ENCODE measurements at regions of chr9 and their contacts with region 1.

Region 1: GRCh38 chr9:33721674-33722358 is 73.5 kb upstream of the PRSS3 start:
- DNase-seq: peak; percentile 56 to 87 (median 60)
- ATAC-seq: peak; percentile 84
- H3K4me3 ChIP-seq: no peak overlapping the region
- H3K27ac ChIP-seq: no peak overlapping the region
- H3K4me1 ChIP-seq: peaks cover 0 to 13% of the 10 kb centered on the region in 2 experiments; a peak in 2 of 5 replicates
- H3K27me3 ChIP-seq: no peaks in the 10 kb centered on the region
- CTCF ChIP-seq: peak; percentile 99 to 100 (median 99)
- EP300 ChIP-seq: no peak
- POLR2A ChIP-seq: no peak
- RAD21 ChIP-seq: peak; percentile 99 to 100

Region 2: DNA sequence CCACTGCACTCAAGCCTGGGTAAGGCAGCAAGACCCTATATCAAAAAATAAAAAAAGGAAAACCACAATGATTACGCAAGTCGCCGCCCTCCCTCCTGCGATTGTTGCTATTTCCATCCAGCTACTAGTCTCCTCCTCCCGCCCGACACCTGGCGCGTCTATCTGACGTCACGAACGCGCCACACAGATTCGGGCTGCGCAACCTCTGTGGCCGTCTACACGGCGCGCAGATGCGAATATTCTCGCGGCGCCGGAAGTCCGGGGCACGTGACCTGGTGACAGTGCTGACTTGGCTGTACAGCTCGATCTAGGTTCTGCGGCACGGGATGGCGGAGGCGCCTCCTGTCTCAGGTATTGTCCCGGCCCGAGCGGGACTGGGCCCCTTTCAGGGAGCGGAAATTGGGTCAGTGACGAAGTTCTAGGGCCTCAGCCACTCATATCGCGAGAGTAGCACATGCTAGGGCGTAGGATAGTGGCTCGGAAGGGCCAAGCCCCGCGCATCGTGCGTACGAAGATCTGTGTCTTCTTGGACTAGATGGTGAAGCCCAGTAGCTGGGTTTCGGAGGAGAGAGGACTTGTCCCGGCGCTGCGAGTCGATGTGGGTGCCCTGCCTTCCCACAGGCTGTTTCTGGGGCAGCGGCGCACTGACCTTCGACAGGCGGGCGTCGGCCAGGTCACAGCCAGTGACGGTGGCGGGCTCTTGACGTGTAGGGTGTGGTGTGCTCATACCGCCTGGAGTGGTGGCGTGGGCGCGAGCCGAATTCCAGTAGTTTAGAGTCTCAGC is 431.4 kb before region 1 on chr9 and contains the start of gene NFX1:
- CTCF ChIA-PET with region 1: interaction called, 11 read pairs
- POLR2A ChIA-PET with region 1: no interaction called
- in situ Hi-C with region 1: no loop called
- intact Hi-C with region 1: no loop called
- DNase-seq: peak; percentile 83 to 97 (median 87)
- ATAC-seq: peak; percentile 95
- H3K4me3 ChIP-seq: peak within 1 kb of the TSS; percentile 60
- H3K27ac ChIP-seq: peak within 1 kb of the TSS; percentile 99
- H3K4me1 ChIP-seq: peaks cover 14 to 21% of the 10 kb centered on the region in 2 experiments; a peak in 4 of 5 replicates
- H3K27me3 ChIP-seq: no peaks in the 10 kb centered on the region
- CTCF ChIP-seq: no peak; a peak in 1 of 6 replicates
- EP300 ChIP-seq: 0 out of 2 replicates have a peak, but pooled peaks have one; percentile 36
- POLR2A ChIP-seq: peak; percentile 93
- RAD21 ChIP-seq: no peak
- polyA plus RNA-seq, gene NFX1: 8.8 to 32.5 TPM

Region 3: DNA sequence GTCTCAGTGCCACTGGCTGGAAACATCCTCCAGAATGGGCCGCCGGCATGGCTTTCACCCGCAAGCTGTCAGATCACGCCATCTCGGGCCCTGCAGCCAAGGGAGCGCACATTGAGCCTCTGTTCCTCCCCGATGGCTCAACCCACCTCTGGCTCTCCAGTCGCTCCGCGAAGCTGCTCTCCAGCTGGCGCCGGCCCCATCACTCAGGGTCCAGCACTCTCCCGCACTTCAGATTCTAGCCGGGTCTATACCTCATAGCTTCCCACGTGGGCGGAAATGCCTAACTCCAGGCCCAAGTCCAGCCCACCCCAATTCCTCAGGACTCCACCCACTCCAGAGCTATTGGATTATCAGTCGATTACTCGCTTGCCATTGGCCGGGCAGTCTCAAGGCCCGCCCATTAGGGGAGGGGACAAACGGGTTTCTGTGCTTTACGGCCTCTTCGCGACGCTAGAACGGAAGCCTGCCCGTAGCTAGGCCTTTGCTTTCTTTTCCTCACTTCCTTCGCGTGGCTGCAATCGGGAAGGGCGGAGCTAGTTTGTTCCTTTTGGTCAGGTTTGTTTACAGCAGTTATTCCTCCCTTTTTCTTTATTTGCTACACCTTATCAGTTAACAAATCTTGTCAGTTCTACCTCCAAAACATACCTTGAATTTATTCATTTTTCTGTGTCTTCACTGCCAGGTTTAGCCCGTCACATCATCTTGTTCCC is 248.0 kb before region 1 on chr9 and contains the start of gene NOL6:
- CTCF ChIA-PET with region 1: no interaction called
- POLR2A ChIA-PET with region 1: no interaction called
- in situ Hi-C with region 1: no loop called
- intact Hi-C with region 1: loop called (anchors 10 kb)
- DNase-seq: peak; percentile 91 to 98 (median 95)
- ATAC-seq: peak; percentile 100
- H3K4me3 ChIP-seq: peak within 1 kb of the TSS; percentile 97
- H3K27ac ChIP-seq: peak within 1 kb of the TSS; percentile 65
- H3K4me1 ChIP-seq: peaks cover 4 to 7% of the 10 kb centered on the region in 2 experiments; a peak in 3 of 5 replicates
- H3K27me3 ChIP-seq: no peaks in the 10 kb centered on the region
- CTCF ChIP-seq: no peak
- EP300 ChIP-seq: no peak
- POLR2A ChIP-seq: peak; percentile 73
- RAD21 ChIP-seq: no peak
- polyA plus RNA-seq, gene NOL6: 7.7 to 9.4 TPM

Region 4: DNA sequence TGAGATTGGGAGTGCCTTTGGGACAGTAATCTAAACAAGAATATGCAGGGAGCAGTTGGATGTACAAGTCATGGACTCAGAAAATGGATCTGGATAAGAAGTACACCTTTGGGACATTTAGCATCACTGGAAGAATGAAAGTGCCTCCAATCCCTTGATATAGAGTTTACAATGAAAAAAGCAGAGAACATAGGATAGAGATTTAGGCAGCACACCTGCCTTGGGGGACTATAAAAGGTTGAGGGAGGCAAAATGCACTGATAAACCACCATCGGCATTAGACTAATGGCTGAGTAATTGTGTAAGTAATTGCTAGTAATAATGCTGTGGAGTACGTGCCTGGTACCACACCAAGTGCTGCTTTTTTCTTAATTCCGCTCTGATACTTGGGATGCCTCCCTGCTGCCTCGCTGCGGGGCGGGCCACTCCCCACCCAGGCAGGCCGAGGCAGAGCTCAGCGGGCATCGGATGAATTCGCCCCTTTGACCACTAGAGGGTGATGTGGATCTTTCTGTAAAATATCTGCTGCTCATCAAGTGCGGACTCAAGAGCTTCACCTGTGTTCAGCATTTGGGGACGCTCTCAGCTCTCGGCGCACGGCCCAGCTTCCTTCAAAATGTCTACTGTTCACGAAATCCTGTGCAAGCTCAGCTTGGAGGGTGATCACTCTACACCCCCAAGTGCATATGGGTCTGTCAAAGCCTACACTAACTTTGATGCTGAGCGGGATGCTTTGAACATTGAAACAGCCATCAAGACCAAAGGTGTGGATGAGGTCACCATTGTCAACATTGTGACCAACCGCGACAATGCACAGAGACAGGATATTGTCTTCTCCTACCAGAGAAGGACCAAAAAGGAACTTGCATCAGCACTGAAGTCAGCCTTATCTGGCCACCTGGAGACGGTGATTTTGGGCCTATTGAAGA is 97.9 kb before region 1 on chr9:
- CTCF ChIA-PET with region 1: interaction called, 80 read pairs
- POLR2A ChIA-PET with region 1: interaction called, 4 read pairs
- in situ Hi-C with region 1: loop called (anchors 5 kb)
- intact Hi-C with region 1: loop called (anchors 1 kb)
- DNase-seq: peak; percentile 67 to 81 (median 73)
- ATAC-seq: peak; percentile 94
- H3K4me3 ChIP-seq: no peak overlapping the region
- H3K27ac ChIP-seq: no peak overlapping the region
- H3K4me1 ChIP-seq: peaks cover 6 to 19% of the 10 kb centered on the region in 2 experiments; a peak in 3 of 5 replicates
- H3K27me3 ChIP-seq: no peaks in the 10 kb centered on the region
- CTCF ChIP-seq: peak; percentile 72 to 92 (median 85)
- EP300 ChIP-seq: no peak
- POLR2A ChIP-seq: no peak
- RAD21 ChIP-seq: peak; percentile 91 to 93

Region 5: GRCh38 chr9:33628865-33629410 is 92.9 kb before region 1 on chr9:
- CTCF ChIA-PET with region 1: interaction called, 80 read pairs
- POLR2A ChIA-PET with region 1: interaction called, 4 read pairs
- in situ Hi-C with region 1: loop called (anchors 5 kb)
- intact Hi-C with region 1: loop called (anchors 1 kb)
- DNase-seq: no peak
- ATAC-seq: no peak
- H3K4me3 ChIP-seq: no peak overlapping the region
- H3K27ac ChIP-seq: no peak overlapping the region
- H3K4me1 ChIP-seq: 0 out of 5 replicates have a peak, but pooled peaks cover 0 to under 1% of the 10 kb centered on the region in 2 experiments
- H3K27me3 ChIP-seq: no peaks in the 10 kb centered on the region
- CTCF ChIP-seq: no peak
- EP300 ChIP-seq: no peak
- POLR2A ChIP-seq: no peak
- RAD21 ChIP-seq: no peak

Region 6: GRCh38 chr9:33676746-33677505 is 44.9 kb before region 1 on chr9:
- CTCF ChIA-PET with region 1: no interaction called
- POLR2A ChIA-PET with region 1: no interaction called
- in situ Hi-C with region 1: no loop called
- intact Hi-C with region 1: loop called (anchors 5 kb)
- DNase-seq: peak; percentile 31 to 42 (median 36)
- ATAC-seq: peak; percentile 94
- H3K4me3 ChIP-seq: peak overlapping the region; percentile 62
- H3K27ac ChIP-seq: peak overlapping the region; percentile 55; the same call in 1 of the 3 replicates
- H3K4me1 ChIP-seq: peaks cover 0 to 5% of the 10 kb centered on the region in 2 experiments; a peak in 2 of 5 replicates
- H3K27me3 ChIP-seq: no peaks in the 10 kb centered on the region
- CTCF ChIP-seq: no peak
- EP300 ChIP-seq: no peak
- POLR2A ChIP-seq: no peak
- RAD21 ChIP-seq: no peak

Measured in K562 (cell line).